Left colon (tissue), 2 donors: ENCODE measurements at regions of chr20 and their contacts with region 1.

Region 1: DNA sequence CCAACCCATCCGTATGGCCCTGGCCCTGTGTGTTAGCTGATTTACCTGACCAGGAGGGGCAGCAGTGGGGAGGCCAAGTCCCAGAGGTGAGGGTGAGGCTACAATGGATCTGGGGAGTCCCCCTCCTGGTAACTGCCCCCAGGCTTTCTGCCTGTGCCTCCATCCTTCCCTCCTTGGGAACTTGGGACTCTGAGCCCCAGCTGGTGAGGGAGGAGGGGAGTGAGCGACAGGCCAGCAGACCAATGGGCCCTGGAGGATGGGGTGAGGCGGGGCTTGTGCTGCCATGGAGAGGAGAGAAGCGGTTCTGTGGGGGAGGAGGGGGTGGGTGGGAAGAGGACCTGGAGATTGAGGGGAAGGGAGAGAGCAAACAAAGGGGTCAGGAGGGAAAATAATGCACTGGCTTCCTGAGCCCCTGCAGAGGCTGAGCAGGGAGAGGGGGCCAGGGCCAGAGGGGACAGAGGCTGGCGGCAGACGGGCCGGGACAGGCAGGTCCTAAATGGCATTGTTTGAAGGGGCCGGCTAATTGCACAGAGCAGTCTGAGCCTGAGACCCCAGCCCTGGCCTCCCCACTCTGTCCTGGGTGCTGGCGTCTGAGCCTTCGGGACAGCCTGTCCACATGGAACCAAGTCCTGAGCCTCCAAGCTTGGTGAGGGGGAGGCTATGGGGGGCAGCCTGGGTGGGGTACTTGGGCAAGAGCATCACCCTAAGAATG is 17.5 kb downstream of the DNMT3B start:
- DNase-seq: no peak
- ATAC-seq: no peak

Region 2: DNA sequence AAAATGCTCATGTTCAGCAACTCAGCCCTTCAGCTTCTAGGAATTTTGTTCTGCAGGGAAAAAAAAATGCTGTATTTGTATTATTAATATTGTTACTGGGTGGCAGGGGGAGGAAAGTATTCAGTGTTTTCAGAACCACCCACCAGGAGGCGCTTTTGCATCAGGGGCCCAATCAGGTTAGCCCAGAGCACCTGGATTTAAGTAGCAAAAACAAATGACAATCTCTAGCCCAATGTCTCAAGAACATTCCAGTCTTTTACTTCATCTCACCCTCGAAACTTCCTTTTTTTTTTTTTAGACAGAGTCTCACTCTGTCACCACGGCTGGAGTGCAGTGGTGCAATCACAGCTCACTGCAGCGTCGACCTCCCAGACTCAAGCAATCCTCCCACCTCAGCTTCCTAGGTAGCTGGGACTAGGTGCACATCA is 105.3 kb before region 1 on chr20:
- intact Hi-C with region 1: loop called in 1 of 2 experiments (anchors 10 kb)
- DNase-seq: peak in 1 of 2 donors; percentile 66
- ATAC-seq: peak; percentile 73

Region 3: DNA sequence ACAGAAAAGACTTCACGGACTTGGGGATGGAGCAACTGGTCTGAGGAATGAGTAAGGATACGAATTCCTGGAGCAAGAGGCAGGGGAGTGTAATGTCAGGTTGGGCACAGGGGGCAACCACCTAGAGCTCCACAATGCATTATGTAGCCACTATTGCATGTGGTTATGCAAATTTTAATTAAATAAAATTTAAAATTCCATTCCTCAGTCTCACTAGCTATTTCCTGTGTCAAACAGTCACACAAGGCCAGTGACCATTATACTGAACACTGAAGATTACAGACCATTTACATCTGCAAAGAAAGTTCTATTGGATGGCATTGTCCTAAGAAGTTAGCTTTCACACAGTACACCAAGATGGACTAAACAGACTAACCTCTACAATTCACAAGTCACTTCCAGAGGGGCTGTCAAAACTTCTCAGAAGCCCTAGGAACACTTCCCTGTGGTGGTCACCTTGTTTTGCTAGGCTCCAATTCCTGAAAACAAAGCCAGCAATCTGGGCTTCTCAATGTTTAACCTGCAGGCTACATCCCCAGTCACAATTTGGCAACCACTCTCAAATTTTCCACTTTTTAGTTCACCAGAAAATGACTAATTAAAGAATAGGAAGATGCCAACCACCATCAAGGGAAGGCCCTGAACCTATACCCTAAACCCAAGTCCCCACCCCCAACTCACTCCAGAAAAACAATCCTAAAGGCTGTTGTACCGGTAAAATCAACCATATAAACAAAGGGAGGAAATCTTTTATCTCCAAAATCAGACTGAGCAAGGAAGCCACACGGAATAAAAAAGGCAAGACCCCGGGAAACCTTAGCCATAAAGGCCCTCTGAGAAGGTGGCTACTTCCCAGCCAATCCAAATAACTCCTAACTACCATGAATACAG is 71.7 kb before region 1 on chr20:
- intact Hi-C with region 1: no loop called
- DNase-seq: no peak
- ATAC-seq: no peak